Body of pancreas (tissue), 4 donors: ENCODE measurements at regions of chr13 and their contacts with region 1.

Region 1: GRCh38 chr13:112959206-112959605 is 9.8 kb upstream of the MCF2L start:
- DNase-seq: no peak
- ATAC-seq: peak; percentile 59
- H3K4me3 ChIP-seq: no peak overlapping the region
- H3K27ac ChIP-seq: peak overlapping the region in 2 of 4 donors; percentile 55 to 61
- H3K4me1 ChIP-seq: no peaks in the 10 kb centered on the region
- H3K27me3 ChIP-seq: no peaks in the 10 kb centered on the region
- CTCF ChIP-seq: no peak
- POLR2A ChIP-seq: no peak

Region 2: GRCh38 chr13:113089693-113090414 is 130.6 kb after region 1 on chr13:
- intact Hi-C with region 1: no loop called
- DNase-seq: no peak
- ATAC-seq: no peak
- H3K4me3 ChIP-seq: no peak overlapping the region
- H3K27ac ChIP-seq: no peak overlapping the region
- H3K4me1 ChIP-seq: no peaks in the 10 kb centered on the region
- H3K27me3 ChIP-seq: no peaks in the 10 kb centered on the region
- CTCF ChIP-seq: no peak
- POLR2A ChIP-seq: no peak

Region 3: GRCh38 chr13:113140677-113141600 is 181.7 kb after region 1 on chr13:
- intact Hi-C with region 1: loop called (anchors 10 kb)
- DNase-seq: no peak
- ATAC-seq: no peak
- H3K4me3 ChIP-seq: no peak overlapping the region
- H3K27ac ChIP-seq: no peak overlapping the region
- H3K4me1 ChIP-seq: no peaks in the 10 kb centered on the region
- H3K27me3 ChIP-seq: no peaks in the 10 kb centered on the region
- CTCF ChIP-seq: no peak
- POLR2A ChIP-seq: no peak